CD4-positive, alpha-beta memory T cell (primary cell): ENCODE measurements at regions of chr4 and their contacts with region 1.

Region 1: DNA sequence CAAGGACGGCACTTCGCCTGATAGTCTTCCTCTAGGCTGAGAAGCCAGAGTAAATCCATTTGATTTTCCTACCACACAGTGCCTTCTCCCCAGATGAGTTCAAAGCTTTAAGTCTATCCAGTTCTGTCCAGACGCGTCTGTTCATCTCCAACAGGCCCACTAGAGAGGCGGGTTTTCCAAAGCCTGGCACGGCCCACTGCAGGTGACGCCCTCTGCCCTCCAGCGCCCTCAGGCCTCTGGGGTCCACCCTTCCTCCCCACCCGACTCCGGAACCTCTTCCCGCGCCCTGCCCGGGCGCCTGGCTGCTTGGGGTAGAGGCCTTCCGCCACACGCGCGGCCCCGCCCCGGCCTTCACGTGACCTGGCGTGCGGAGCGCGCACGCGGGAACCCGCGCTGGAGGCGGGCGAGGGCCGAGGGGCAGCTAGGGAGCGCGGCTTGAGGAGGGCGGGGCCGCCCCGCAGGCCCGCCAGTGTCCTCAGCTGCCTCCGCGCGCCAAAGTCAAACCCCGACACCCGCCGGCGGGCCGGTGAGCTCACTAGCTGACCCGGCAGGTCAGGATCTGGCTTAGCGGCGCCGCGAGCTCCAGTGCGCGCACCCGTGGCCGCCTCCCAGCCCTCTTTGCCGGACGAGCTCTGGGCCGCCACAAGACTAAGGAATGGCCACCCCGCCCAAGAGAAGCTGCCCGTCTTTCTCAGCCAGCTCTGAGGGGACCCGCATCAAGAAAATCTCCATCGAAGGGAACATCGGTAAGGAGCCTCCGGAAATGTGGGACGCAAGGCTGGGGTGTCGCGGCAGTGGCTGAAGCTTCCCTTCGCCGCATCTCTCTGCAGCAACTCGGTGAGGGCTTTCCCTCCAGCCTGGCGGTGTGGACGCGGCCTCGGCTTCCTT is at the start of gene DCK:
- DNase-seq: peak; percentile 82 to 87 (median 84)
- H3K4me3 ChIP-seq: peak within 1 kb of the TSS; percentile 81 to 99
- H3K4me3 Mint-ChIP-seq: peak within 1 kb of the TSS; percentile 88 to 99 (median 96)
- H3K27ac ChIP-seq: peak within 1 kb of the TSS; percentile 80
- H3K27ac Mint-ChIP-seq: peak within 1 kb of the TSS; percentile 87 to 98 (median 95)
- H3K4me1 ChIP-seq: peaks cover 50% of the 10 kb centered on the region
- H3K4me1 Mint-ChIP-seq: peaks cover 35 to 55% (median 42%) of the 10 kb centered on the region in 4 donors
- H3K27me3 ChIP-seq: no peaks in the 10 kb centered on the region
- H3K27me3 Mint-ChIP-seq: no peaks in the 10 kb centered on the region
- total RNA-seq, gene DCK: 54.7 to 56.9 TPM

Region 2: DNA sequence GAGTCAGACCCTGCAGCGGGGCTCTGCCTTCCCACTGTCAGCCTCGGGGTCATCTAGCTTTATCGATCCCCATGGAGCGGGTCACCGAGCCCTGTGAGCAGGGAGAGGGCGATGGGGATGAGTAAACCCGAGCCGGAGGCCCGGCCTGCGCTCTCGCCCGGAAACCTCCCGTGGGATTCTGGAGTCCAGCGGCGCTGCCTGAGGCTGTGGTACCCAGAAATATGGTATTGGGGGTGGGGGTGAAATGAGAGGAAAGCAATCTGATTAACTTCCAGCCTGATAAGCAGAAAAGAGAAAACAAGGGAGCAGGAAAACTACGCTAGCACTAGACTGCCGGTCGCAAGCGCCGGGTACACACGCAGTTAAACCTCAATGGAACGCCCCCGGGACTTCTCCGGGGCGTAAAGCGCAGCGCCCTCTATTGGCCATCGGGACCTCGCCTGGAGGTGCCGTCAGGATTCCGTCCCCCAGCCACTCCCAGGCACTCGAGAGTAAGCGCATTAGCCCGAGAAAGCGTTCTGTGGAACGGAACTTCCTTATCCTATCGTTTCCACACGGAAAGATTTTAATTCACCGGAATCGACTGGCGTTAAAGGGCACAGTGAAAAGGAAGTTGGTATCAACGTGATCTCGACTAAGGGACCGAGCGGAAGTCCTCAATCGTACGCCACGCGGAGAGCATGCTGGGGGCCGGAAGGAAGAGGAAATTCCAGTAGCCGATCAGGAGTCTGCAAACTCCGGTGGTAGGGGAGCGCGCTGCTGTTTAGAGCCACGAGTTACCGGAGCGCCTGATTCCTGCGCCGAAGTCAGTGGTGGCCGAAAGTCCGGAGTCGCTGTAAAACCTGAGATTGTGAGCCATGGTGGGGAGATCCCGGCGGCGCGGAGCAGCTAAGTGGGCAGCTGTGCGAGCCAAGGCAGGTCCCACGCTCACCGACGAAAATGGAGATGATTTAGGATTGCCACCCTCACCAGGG is 305.3 kb before region 1 on chr4 and contains the start of gene UTP3:
- CTCF ChIA-PET with region 1: interaction called, 6 read pairs
- POLR2A ChIA-PET with region 1: interaction called, 15 read pairs
- intact Hi-C with region 1: loop called (anchors 5 kb)
- DNase-seq: peak; percentile 93 to 95 (median 94)
- H3K4me3 ChIP-seq: peak within 1 kb of the TSS; percentile 70 to 99
- H3K4me3 Mint-ChIP-seq: peak within 1 kb of the TSS; percentile 92 to 100 (median 97)
- H3K27ac ChIP-seq: peak within 1 kb of the TSS; percentile 94
- H3K27ac Mint-ChIP-seq: peak within 1 kb of the TSS; percentile 95 to 100 (median 99)
- H3K4me1 ChIP-seq: peaks cover 37% of the 10 kb centered on the region
- H3K4me1 Mint-ChIP-seq: peaks cover 24 to 42% (median 35%) of the 10 kb centered on the region in 4 donors
- H3K27me3 ChIP-seq: no peaks in the 10 kb centered on the region
- H3K27me3 Mint-ChIP-seq: no peaks in the 10 kb centered on the region
- total RNA-seq, gene UTP3: 43.2 to 45.3 TPM

Region 3: GRCh38 chr4:70749313-70749712 is 244.1 kb before region 1 on chr4:
- CTCF ChIA-PET with region 1: no interaction called
- POLR2A ChIA-PET with region 1: no interaction called
- intact Hi-C with region 1: no loop called
- DNase-seq: no peak
- H3K4me3 ChIP-seq: no peak overlapping the region
- H3K4me3 Mint-ChIP-seq: no peak overlapping the region
- H3K27ac ChIP-seq: no peak overlapping the region
- H3K27ac Mint-ChIP-seq: no peak overlapping the region
- H3K4me1 ChIP-seq: no peaks in the 10 kb centered on the region
- H3K4me1 Mint-ChIP-seq: peaks cover 7 to 11% (median 9%) of the 10 kb centered on the region in 4 donors
- H3K27me3 ChIP-seq: no peaks in the 10 kb centered on the region
- H3K27me3 Mint-ChIP-seq: no peaks in the 10 kb centered on the region

Region 4: GRCh38 chr4:70839589-70840093 is 153.8 kb before region 1 on chr4 and contains the start of gene GRSF1:
- CTCF ChIA-PET with region 1: interaction called, 4 read pairs
- POLR2A ChIA-PET with region 1: interaction called, 44 read pairs
- intact Hi-C with region 1: loop called (anchors 2 kb)
- DNase-seq: peak; percentile 95 to 96 (median 95)
- H3K4me3 ChIP-seq: peak within 1 kb of the TSS; percentile 58 to 69
- H3K4me3 Mint-ChIP-seq: peak within 1 kb of the TSS; percentile 95 to 99 (median 98)
- H3K27ac ChIP-seq: peak within 1 kb of the TSS; percentile 77
- H3K27ac Mint-ChIP-seq: peak within 1 kb of the TSS; percentile 94 to 99 (median 97)
- H3K4me1 ChIP-seq: peaks cover 32% of the 10 kb centered on the region
- H3K4me1 Mint-ChIP-seq: peaks cover 16 to 39% (median 27%) of the 10 kb centered on the region in 4 donors
- H3K27me3 ChIP-seq: no peaks in the 10 kb centered on the region
- H3K27me3 Mint-ChIP-seq: no peaks in the 10 kb centered on the region
- total RNA-seq, gene GRSF1: 47.0 to 54.3 TPM

Region 5: DNA sequence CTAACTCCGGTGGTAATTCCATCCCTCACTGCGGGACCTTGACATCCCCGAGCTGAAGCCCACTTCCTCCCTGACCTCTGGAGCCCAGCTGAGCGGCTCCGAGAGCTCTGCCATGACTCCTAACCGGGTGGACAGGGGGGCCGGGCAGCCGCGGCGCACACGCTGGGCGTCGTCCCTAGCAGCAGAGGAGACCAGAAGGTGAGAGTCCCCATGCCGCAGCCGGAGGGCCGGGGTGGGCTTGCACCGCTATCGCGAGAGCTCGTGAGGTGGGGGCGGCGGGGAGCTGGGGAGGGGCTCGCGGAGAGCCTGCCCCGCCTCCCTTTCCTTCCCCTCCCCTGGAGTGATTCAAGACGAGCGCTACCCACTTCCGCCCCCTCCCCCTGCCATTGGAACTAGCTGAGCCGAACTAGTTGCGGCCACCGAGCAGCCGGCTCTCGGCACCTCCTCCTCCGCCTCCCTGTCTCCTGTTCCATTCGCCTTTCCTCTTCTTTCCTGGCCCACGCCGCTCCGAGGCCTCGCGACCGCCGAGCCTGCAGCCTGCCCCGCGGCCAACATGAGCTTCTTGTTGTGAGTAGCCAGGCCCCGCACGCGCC is 91.3 kb before region 1 on chr4 and contains the start of gene MOB1B:
- CTCF ChIA-PET with region 1: interaction called, 7 read pairs
- POLR2A ChIA-PET with region 1: interaction called, 22 read pairs
- intact Hi-C with region 1: loop called (anchors 2 kb)
- DNase-seq: peak; percentile 81 to 88 (median 82)
- H3K4me3 ChIP-seq: peak within 1 kb of the TSS; percentile 79 to 95
- H3K4me3 Mint-ChIP-seq: peak within 1 kb of the TSS; percentile 97 to 99 (median 98)
- H3K27ac ChIP-seq: peak within 1 kb of the TSS; percentile 71
- H3K27ac Mint-ChIP-seq: peak within 1 kb of the TSS; percentile 49 to 94 (median 92)
- H3K4me1 ChIP-seq: peaks cover 17% of the 10 kb centered on the region
- H3K4me1 Mint-ChIP-seq: peaks cover 17 to 41% (median 26%) of the 10 kb centered on the region in 4 donors
- H3K27me3 ChIP-seq: no peaks in the 10 kb centered on the region
- H3K27me3 Mint-ChIP-seq: peaks cover 0 to 1% of the 10 kb centered on the region in 2 donors
- total RNA-seq, gene MOB1B: 10.2 to 10.8 TPM

Region 6: DNA sequence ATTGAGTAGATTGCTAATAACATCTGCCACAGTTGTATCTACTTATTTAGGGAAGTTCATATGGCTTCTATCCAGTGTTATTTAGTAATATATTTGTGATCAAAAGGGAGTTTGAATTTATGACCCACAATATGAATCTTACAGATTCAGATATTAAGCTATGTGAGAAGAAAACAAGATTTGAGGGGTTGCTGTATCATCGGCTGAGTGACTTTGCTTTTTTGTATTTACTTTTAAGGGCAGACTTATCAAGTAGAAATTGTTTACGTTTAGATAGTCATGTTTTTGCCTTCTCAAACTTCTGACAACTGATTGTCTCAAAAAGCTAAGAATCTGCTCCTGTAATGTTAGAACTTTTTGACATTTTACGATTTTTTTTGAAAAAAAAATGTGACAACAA is 17.2 kb before region 1 on chr4:
- CTCF ChIA-PET with region 1: no interaction called
- POLR2A ChIA-PET with region 1: no interaction called
- intact Hi-C with region 1: no loop called
- DNase-seq: no peak
- H3K4me3 ChIP-seq: no peak overlapping the region
- H3K4me3 Mint-ChIP-seq: no peak overlapping the region
- H3K27ac ChIP-seq: no peak overlapping the region
- H3K27ac Mint-ChIP-seq: no peak overlapping the region
- H3K4me1 ChIP-seq: no peaks in the 10 kb centered on the region
- H3K4me1 Mint-ChIP-seq: no peaks in the 10 kb centered on the region
- H3K27me3 ChIP-seq: no peaks in the 10 kb centered on the region
- H3K27me3 Mint-ChIP-seq: no peaks in the 10 kb centered on the region

Region 7: DNA sequence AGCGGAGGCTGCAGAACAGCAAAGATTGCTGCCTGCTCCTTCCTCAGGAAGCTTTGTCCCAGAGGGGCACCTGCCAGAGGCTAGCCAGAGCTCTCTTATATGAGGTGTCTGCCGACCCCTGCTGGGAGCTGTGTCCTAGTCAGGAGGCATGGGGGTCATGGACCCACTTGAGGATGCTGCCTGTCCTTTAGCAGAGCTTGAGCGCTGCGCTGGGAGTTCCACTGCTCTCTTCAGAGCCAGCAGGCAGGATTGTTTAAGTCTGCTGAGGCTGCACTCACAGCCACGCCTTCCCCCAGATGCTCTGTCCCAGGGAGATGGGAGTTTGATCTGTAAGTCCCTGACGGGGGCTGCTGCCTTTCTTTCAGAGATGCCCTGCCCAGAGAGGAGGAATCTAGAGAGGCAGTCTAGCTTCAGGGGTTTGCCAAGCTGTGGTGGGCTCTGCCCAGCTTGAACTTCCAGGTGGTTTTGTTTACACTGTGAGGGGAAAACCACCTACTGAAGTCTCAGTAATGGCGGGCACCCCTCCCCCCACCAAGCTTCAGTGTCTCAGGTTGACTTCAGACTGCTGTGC is 10.9 kb after region 1 on chr4:
- CTCF ChIA-PET with region 1: interaction called, 127 read pairs
- POLR2A ChIA-PET with region 1: interaction called, 22 read pairs
- intact Hi-C with region 1: loop called (anchors 1 kb)
- DNase-seq: peak; percentile 40 to 77 (median 53)
- H3K4me3 ChIP-seq: no peak overlapping the region
- H3K4me3 Mint-ChIP-seq: peak overlapping the region; percentile 3 to 77 (median 64)
- H3K27ac ChIP-seq: peak overlapping the region; percentile 50
- H3K27ac Mint-ChIP-seq: peak overlapping the region; percentile 80 to 94 (median 86)
- H3K4me1 ChIP-seq: peaks cover 80% of the 10 kb centered on the region
- H3K4me1 Mint-ChIP-seq: peaks cover 66 to 91% (median 79%) of the 10 kb centered on the region in 4 donors
- H3K27me3 ChIP-seq: no peaks in the 10 kb centered on the region
- H3K27me3 Mint-ChIP-seq: no peaks in the 10 kb centered on the region

Region 8: GRCh38 chr4:71020611-71021010 is 27.2 kb after region 1 on chr4:
- CTCF ChIA-PET with region 1: interaction called, 3 read pairs
- POLR2A ChIA-PET with region 1: interaction called, 3 read pairs
- intact Hi-C with region 1: loop called (anchors 5 kb)
- DNase-seq: no peak
- H3K4me3 ChIP-seq: no peak overlapping the region
- H3K4me3 Mint-ChIP-seq: no peak overlapping the region
- H3K27ac ChIP-seq: no peak overlapping the region
- H3K27ac Mint-ChIP-seq: peak overlapping the region in 1 of 7 donors; percentile 48
- H3K4me1 ChIP-seq: no peaks in the 10 kb centered on the region
- H3K4me1 Mint-ChIP-seq: peaks cover 7 to 33% (median 12%) of the 10 kb centered on the region in 4 donors
- H3K27me3 ChIP-seq: no peaks in the 10 kb centered on the region
- H3K27me3 Mint-ChIP-seq: no peaks in the 10 kb centered on the region